Activated CD4-positive, alpha-beta memory T cell treated with anti-CD3 and anti-CD28 coated beads for 36 hours (primary cell): ENCODE measurements at regions of chr2 and their contacts with region 1.

Region 1: DNA sequence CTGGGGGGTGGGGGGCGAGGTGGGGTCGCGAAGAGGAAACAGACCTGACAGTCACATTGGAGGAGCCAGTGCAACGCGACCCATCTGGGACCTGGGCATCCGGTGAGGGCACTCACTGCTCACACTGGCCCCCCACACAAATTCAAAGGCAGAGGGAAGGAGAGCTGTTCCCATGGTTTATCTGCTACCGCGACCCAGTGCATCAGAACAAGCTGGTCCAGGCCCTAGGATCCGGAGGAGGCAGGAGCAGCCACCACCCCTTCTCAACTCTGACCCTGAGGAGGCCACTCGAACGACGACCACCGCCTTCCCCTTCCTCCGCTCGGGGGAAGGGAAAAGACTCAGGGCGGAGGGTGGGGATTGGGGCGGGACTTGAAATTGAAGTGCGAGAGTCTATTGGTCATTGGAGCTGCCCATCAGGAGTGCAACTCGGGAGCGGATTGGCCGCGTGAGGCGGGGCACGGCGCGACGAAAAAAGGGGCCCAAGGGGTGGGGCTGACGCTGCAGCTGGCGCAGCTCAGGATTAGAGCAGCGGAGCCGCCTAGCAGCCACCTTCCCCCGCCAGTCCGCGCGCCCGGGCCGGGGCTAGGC is at the start of gene CDK5R2:
- DNase-seq: peak; percentile 85
- H3K4me3 Mint-ChIP-seq: peak within 1 kb of the TSS; percentile 48
- H3K27ac Mint-ChIP-seq: no peak within 1 kb of the TSS
- H3K4me1 Mint-ChIP-seq: peaks cover 14% of the 10 kb centered on the region
- H3K27me3 Mint-ChIP-seq: peaks cover 65% of the 10 kb centered on the region
- total RNA-seq, gene CDK5R2: not detected

Region 2: GRCh38 chr2:218908721-218909619 is 50.3 kb before region 1 on chr2:
- CTCF ChIA-PET with region 1: no interaction called
- POLR2A ChIA-PET with region 1: no interaction called
- intact Hi-C with region 1: loop called (anchors 1 kb)
- DNase-seq: peak; percentile 96
- H3K4me3 Mint-ChIP-seq: peak overlapping the region; percentile 85
- H3K27ac Mint-ChIP-seq: peak overlapping the region; percentile 71
- H3K4me1 Mint-ChIP-seq: peaks cover 15% of the 10 kb centered on the region
- H3K27me3 Mint-ChIP-seq: peaks cover 6% of the 10 kb centered on the region